Common myeloid progenitor, CD34-positive (primary cell): ENCODE measurements at regions of chr2 and their contacts with region 1.

Region 1: GRCh38 chr2:184543832-184544231 is 54.5 kb upstream of the ZNF804A start:
- DNase-seq: no peak
- H3K4me3 ChIP-seq: no peak overlapping the region
- H3K27ac ChIP-seq: no peak overlapping the region
- H3K4me1 ChIP-seq: no peaks in the 10 kb centered on the region
- H3K27me3 ChIP-seq: no peaks in the 10 kb centered on the region

Region 2: GRCh38 chr2:184425083-184425482 is 118.7 kb before region 1 on chr2:
- CTCF ChIA-PET with region 1: no interaction called
- POLR2A ChIA-PET with region 1: no interaction called
- DNase-seq: no peak
- H3K4me3 ChIP-seq: no peak overlapping the region
- H3K27ac ChIP-seq: no peak overlapping the region
- H3K4me1 ChIP-seq: no peaks in the 10 kb centered on the region
- H3K27me3 ChIP-seq: no peaks in the 10 kb centered on the region

Region 3: GRCh38 chr2:184566716-184567115 is 22.9 kb after region 1 on chr2:
- CTCF ChIA-PET with region 1: no interaction called
- POLR2A ChIA-PET with region 1: no interaction called
- DNase-seq: no peak
- H3K4me3 ChIP-seq: no peak overlapping the region
- H3K27ac ChIP-seq: no peak overlapping the region
- H3K4me1 ChIP-seq: peaks cover 0 to 6% (median 0%) of the 10 kb centered on the region in 4 experiments
- H3K27me3 ChIP-seq: no peaks in the 10 kb centered on the region

Region 4: GRCh38 chr2:185255566-185255965 is 711.7 kb after region 1 on chr2:
- CTCF ChIA-PET with region 1: no interaction called
- POLR2A ChIA-PET with region 1: interaction called, 15 read pairs
- DNase-seq: no peak
- H3K4me3 ChIP-seq: no peak overlapping the region
- H3K27ac ChIP-seq: no peak overlapping the region
- H3K4me1 ChIP-seq: no peaks in the 10 kb centered on the region
- H3K27me3 ChIP-seq: no peaks in the 10 kb centered on the region